Ascending aorta (tissue), 2 donors: ENCODE measurements at regions of chr18 and their contacts with region 1.

Region 1: DNA sequence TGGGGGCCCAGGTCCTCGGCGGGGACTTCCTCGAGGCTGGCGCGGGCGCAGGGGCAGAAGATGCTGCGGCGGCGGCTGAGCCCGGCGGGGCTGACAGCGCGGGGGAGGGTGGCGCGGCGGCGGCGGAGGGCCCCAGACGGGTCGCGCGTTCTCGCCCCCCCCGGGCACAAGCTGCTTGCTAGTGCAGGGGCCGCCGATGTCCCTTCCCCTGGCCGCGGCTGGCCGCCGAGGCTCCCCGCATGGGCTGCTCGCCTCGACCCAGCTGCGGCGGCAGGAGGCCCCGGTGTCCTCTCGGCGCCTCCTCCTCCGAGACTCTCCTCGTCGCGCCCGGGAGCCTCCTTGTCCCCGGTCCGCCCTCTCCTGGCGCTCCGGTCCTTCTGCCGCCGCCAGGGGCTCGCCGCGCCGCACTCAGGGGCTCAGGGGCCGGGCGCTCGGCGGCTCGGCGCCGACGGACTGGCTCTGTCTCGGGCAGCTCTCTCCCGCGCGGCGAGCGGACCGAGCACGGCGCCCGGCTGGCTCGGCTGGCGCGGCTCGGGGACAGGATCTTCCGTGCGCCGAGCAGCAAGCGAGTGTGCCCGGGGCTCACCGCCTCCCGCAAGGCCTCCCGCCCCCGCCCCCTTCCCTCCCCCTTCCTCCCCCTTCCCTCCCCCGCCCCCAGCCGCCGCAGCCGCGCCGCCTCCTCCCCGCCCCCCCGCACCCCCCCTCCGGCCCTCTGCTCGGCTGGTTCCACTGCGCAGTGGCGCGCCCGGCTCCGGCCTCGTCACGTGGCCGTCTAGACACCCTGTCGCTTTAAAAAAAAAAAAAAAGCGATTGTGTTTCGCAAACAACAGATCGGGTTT is 902 bp upstream of the SMAD7 start:
- DNase-seq: peak in 1 of 2 donors; percentile 93
- H3K4me3 ChIP-seq: peak overlapping the region; percentile 88 to 94
- H3K27ac ChIP-seq: peak overlapping the region; percentile 97 to 99
- H3K4me1 ChIP-seq: peaks cover 15 to 37% of the 10 kb centered on the region in 2 donors
- H3K27me3 ChIP-seq: no peaks in the 10 kb centered on the region
- CTCF ChIP-seq: peak; percentile 13 to 55 (median 21)

Region 2: GRCh38 chr18:48902023-48902855 is 49.4 kb before region 1 on chr18:
- intact Hi-C with region 1: loop called (anchors 2 kb)
- DNase-seq: peak; percentile 82 to 98
- H3K4me3 ChIP-seq: no peak overlapping the region
- H3K27ac ChIP-seq: peak overlapping the region; percentile 94
- H3K4me1 ChIP-seq: peaks cover 13 to 26% of the 10 kb centered on the region in 2 donors
- H3K27me3 ChIP-seq: no peaks in the 10 kb centered on the region
- CTCF ChIP-seq: no peak

Region 3: GRCh38 chr18:48997985-48998831 is 46.5 kb after region 1 on chr18:
- intact Hi-C with region 1: loop called (anchors 1 kb)
- DNase-seq: peak; percentile 81 to 97
- H3K4me3 ChIP-seq: peak overlapping the region in 1 of 2 donors; percentile 17
- H3K27ac ChIP-seq: peak overlapping the region; percentile 87 to 88
- H3K4me1 ChIP-seq: peaks cover 16 to 41% of the 10 kb centered on the region in 2 donors
- H3K27me3 ChIP-seq: no peaks in the 10 kb centered on the region
- CTCF ChIP-seq: no peak

Region 4: DNA sequence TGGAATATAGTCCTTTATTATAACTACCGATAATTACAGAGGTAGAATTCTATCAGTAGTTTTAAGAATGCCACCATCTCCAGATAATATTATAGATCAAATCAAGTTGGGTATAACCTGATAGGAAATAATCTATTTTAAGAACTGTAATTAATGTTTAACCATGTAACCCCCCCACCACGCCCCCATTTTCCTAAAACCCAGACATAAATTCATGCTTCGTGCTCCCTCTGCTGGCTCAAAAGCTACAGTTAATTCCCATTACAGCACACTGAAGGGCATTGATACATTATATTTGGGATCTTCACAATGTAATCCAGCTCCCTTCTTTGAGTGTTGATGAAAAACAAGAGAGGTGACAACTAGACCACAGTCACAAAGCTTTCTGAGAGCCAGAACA is 227.1 kb after region 1 on chr18:
- intact Hi-C with region 1: loop called (anchors 5 kb)
- DNase-seq: no peak
- H3K4me3 ChIP-seq: no peak overlapping the region
- H3K27ac ChIP-seq: no peak overlapping the region
- H3K4me1 ChIP-seq: peaks cover 0 to 4% of the 10 kb centered on the region in 2 donors
- H3K27me3 ChIP-seq: no peaks in the 10 kb centered on the region
- CTCF ChIP-seq: peak; percentile 42 to 68 (median 63)